Dendritic cell treated with granulocyte-macrophage colony-stimulating factor and Interleukin-4, amounts not matched to agents 40 ng/mL and 50 ng/mL, for 4 days (primary cell): ENCODE measurements at regions of chr16 and their contacts with region 1.

Region 1: DNA sequence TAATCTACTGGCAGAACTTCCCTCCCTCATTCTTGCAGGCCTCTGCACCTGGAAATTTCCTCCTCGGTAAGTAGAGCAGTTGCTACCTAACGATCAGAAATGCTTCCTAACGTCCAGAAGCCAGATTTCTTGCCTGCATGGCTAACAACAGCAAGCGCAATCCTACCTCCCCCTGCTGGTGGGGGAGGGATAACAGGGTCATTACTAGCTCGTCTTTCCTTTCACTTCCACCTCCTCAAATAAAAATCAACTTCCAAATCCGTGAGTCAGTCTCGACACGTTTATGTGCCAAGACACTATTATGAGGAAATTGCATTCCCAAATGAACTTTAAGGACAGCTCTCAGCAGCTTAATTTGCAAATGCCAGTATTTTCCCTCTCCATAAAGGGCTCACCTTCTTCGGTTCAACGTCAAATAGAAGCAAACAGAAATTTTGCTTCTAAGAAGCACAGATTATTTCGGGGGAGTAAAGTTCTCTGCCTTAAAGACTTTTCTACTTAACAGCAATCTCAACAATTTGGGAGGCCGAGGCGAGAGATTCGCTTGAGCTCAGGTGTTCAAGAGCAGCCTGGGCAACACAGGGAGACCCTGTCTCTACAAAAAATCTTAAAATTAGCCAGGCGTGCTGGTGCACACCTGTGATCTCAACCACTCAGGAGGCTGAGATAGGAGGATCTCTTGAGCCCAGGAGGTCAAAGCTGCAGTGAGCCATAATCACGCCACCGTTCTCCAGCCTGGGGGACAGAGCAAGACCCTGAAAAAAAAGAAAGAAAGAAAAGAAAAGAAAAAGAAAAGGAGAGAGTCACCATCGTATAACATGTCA is 188.6 kb upstream of the PSMD7 start:
- H3K4me3 Mint-ChIP-seq: peak overlapping the region; percentile 24
- H3K27ac Mint-ChIP-seq: no peak overlapping the region
- H3K4me1 Mint-ChIP-seq: peaks cover 13% of the 10 kb centered on the region
- H3K27me3 Mint-ChIP-seq: peaks cover 2% of the 10 kb centered on the region

Region 2: GRCh38 chr16:74034862-74035261 is 73.1 kb before region 1 on chr16:
- intact Hi-C with region 1: loop called (anchors 10 kb)
- H3K4me3 Mint-ChIP-seq: no peak overlapping the region
- H3K27ac Mint-ChIP-seq: no peak overlapping the region
- H3K4me1 Mint-ChIP-seq: no peaks in the 10 kb centered on the region
- H3K27me3 Mint-ChIP-seq: peaks cover 5% of the 10 kb centered on the region

Region 3: GRCh38 chr16:74064120-74064735 is 43.8 kb before region 1 on chr16:
- intact Hi-C with region 1: loop called (anchors 1 kb)
- H3K4me3 Mint-ChIP-seq: no peak overlapping the region
- H3K27ac Mint-ChIP-seq: no peak overlapping the region
- H3K4me1 Mint-ChIP-seq: no peaks in the 10 kb centered on the region
- H3K27me3 Mint-ChIP-seq: no peaks in the 10 kb centered on the region

Region 4: GRCh38 chr16:74146643-74147042 is 38.6 kb after region 1 on chr16:
- intact Hi-C with region 1: no loop called
- H3K4me3 Mint-ChIP-seq: no peak overlapping the region
- H3K27ac Mint-ChIP-seq: no peak overlapping the region
- H3K4me1 Mint-ChIP-seq: no peaks in the 10 kb centered on the region
- H3K27me3 Mint-ChIP-seq: no peaks in the 10 kb centered on the region